ENCODE measurements at regions of chr14 and their contacts with region 1.

Region 1: GRCh38 chr14:57268161-57269069 is at the starts of genes AP5M1 and EXOC5:
- DNase-seq: peak; percentile 89
- CTCF ChIP-seq: no peak

Region 2: DNA sequence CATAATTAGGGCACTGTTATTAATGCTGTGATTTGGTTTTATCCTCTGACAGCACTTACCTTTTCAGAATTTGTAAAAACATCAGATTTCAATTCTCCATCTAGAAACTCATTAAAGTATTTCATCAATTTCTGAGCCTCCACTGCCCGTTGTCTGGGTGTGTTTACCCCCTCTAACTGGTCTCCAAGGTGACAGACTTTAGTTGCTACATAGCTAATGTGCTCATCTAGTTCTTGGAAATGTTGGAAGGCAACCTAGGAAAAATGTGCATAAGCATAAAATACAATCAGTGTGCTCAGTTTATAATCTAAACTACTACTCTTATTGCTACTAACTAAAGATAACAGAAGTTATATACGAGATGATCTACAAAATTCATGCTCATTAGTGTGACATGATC is 24.3 kb before region 1 on chr14:
- CTCF ChIA-PET with region 1: interaction called, 10 read pairs
- POLR2A ChIA-PET with region 1: no interaction called
- DNase-seq: no peak
- CTCF ChIP-seq: no peak

Region 3: GRCh38 chr14:57317316-57317715 is 48.9 kb after region 1 on chr14:
- CTCF ChIA-PET with region 1: no interaction called
- POLR2A ChIA-PET with region 1: no interaction called
- DNase-seq: peak; percentile 57
- CTCF ChIP-seq: peak; percentile 75

Region 4: DNA sequence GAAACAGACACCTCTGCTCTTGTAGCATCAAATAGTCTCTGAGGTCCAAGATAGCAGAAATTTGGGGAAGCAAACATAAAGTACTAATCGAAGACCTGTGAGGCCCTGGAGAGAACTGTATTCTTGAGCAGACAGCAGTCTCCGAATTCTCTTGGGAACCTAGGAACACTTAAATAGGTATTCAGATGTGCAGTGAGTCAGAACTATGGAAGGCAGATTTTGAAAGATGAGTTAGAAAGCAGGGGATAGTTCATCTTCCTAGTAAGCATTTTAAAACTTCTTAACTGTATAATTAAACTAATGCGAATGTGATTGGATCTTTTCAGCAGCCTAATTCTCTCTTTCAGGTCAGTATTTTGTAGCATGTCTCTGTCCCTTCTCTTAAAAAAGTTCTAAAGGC is 152.6 kb after region 1 on chr14:
- CTCF ChIA-PET with region 1: no interaction called
- POLR2A ChIA-PET with region 1: no interaction called
- DNase-seq: no peak
- CTCF ChIP-seq: no peak